Testis (tissue), 5 donors: ENCODE measurements at regions of chr15 and their contacts with region 1.

Region 1: GRCh38 chr15:25192651-25193050 is 237.9 kb downstream of the SNRPN start:
- DNase-seq: no peak
- H3K4me3 ChIP-seq: no peak overlapping the region
- H3K27ac ChIP-seq: no peak overlapping the region
- H3K4me1 ChIP-seq: no peaks in the 10 kb centered on the region
- H3K27me3 ChIP-seq: no peaks in the 10 kb centered on the region
- CTCF ChIP-seq: no peak
- POLR2A ChIP-seq: no peak

Region 2: DNA sequence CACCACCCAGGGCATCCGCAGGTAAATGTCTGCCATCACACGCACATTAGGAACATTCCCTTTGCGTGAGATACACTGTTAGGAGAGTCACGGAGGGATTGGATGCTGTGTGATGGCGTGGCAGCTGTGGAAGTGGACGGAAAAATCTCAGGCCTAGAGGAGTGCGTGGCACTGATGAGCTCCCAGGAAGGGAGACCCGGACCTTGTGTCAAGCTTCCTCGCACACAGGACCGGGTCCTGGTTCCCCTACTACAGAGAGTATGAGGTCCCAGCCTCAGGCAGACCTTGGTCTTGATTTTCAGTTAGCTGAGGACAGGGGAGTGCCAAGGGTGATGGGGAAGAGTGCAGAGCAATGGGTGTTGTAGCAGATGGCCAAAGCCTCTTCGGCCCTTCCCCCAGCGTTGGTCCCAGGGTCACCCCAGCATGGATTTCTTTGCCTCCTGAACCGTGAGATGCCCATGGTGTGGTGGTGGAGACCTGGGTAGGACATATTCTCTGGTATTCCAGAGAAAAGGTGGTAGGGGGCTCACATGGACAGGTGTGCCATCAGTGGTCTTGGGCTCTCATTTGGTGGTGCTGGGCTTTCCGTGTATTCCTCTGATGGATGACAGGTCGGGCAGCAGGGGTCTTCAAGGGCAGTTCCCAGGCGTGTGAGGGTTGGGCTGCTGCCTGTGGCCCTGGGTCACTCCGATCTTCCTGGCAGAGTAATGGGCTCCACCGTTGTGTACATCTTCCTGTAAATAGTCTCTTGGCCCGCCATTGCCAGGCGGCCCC is 132.8 kb before region 1 on chr15:
- intact Hi-C with region 1: no loop called
- DNase-seq: peak; percentile 9
- H3K4me3 ChIP-seq: no peak overlapping the region
- H3K27ac ChIP-seq: no peak overlapping the region
- H3K4me1 ChIP-seq: no peaks in the 10 kb centered on the region
- H3K27me3 ChIP-seq: no peaks in the 10 kb centered on the region
- CTCF ChIP-seq: no peak
- POLR2A ChIP-seq: no peak

Region 3: DNA sequence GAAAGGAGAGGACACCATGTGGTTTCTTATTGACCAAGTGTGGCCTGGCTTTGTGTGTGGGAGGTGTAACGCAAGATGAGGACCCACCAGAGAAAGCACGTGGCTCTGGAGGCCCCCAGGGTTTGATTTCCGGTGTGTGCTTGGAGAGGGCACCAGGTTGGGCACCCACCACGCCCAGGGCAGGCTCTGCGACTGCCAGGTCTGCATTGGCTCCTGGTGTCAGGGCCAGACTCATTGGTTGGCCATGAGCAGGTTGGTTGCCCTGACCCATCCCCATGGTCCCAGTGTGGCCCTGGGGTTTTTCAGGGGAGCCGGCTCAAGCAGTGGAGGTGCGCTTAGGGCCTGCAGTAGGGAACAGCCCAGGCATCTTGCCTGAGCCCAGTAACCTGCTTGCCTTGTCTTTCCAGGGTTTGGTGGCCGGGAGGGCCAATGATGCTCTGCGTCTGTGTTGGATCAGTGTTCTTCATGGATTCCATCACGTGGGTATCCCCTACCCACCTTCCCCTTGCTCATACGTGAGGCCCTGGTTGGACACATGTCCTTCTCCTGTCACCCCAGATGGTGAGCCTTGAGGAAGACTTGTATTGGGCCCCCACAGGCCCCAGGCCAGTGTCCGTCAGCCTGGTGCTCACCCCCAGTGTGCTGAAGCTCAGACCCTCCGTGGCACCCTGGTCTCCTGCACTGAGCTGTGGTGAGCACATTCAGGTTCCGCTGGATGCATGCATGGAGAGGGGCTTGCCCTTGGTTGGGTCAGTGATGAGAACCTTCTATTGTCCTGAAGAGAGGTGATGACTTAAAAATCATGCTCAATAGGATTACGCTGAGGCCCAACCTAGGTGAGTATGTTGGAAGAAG is 52.3 kb after region 1 on chr15:
- intact Hi-C with region 1: loop called (anchors 5 kb)
- DNase-seq: peak; percentile 9
- H3K4me3 ChIP-seq: no peak overlapping the region
- H3K27ac ChIP-seq: no peak overlapping the region
- H3K4me1 ChIP-seq: no peaks in the 10 kb centered on the region
- H3K27me3 ChIP-seq: no peaks in the 10 kb centered on the region
- CTCF ChIP-seq: no peak
- POLR2A ChIP-seq: no peak